HepG2 (cell line): ENCODE measurements at regions of chr12 and their contacts with region 1.

Region 1: GRCh38 chr12:60935983-60936761 is 1324.0 kb upstream of the USP15 start:
- DNase-seq: peak; percentile 3
- ATAC-seq: peak; percentile 61
- H3K4me3 ChIP-seq: no peak overlapping the region
- H3K27ac ChIP-seq: no peak overlapping the region
- H3K4me1 ChIP-seq: no peaks in the 10 kb centered on the region
- H3K27me3 ChIP-seq: no peaks in the 10 kb centered on the region
- CTCF ChIP-seq: no peak
- EP300 ChIP-seq: no peak
- POLR2A ChIP-seq: no peak
- RAD21 ChIP-seq: no peak

Region 2: DNA sequence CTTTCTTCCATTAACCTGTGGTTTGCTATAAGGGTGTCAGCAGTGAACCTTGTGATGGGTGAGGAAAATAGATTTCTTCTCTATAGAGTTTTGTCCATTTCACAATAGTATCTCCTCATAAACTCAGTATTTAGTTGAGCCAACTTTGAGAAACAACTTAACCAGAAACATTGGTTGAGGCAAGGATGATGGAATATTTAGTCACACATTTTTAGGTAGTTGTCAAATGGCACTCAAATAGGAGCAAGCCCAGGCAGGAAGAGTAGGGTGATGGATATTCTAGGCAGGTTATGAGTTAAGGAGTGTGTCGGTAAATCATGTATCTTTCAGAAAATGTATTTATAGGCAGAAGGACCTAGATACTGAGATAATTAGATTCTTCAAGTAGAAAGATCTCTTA is 72.8 kb before region 1 on chr12:
- CTCF ChIA-PET with region 1: no interaction called
- POLR2A ChIA-PET with region 1: no interaction called
- in situ Hi-C with region 1: no loop called
- intact Hi-C with region 1: no loop called
- DNase-seq: no peak
- ATAC-seq: no peak
- H3K4me3 ChIP-seq: no peak overlapping the region
- H3K27ac ChIP-seq: no peak overlapping the region
- H3K4me1 ChIP-seq: no peaks in the 10 kb centered on the region
- H3K27me3 ChIP-seq: no peaks in the 10 kb centered on the region
- CTCF ChIP-seq: no peak
- EP300 ChIP-seq: no peak
- POLR2A ChIP-seq: no peak
- RAD21 ChIP-seq: no peak

Region 3: DNA sequence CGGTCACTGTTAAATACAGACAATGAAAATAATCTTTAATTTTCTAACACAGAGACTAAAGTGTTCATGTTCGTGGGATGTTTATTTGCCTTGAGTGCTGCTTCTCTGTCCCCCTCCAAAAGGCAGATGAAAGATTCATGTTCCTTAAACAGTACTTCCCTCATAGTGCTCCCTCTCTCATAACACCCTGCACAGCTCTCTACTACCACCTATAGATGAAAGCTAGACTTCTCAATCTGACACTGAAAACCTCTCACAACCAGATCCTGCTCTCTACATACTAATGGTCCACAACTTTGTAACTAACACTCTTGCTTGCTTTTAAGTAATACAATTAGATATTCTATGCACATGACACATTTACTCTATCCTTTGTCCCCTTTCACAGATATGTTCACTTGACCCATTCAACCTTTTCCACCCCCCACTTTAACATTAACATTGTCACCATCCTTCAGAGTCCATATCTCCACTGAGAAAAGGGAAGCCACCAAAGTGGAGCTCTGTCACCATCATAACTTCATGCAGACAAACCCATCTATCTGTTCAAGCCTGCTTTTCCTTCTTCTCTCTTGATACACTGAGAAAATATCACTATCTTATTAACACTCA is 1057.7 kb after region 1 on chr12:
- CTCF ChIA-PET with region 1: no interaction called
- POLR2A ChIA-PET with region 1: no interaction called
- in situ Hi-C with region 1: no loop called
- intact Hi-C with region 1: loop called (anchors 10 kb)
- DNase-seq: peak; percentile 14
- ATAC-seq: peak; percentile 91
- H3K4me3 ChIP-seq: no peak overlapping the region
- H3K27ac ChIP-seq: no peak overlapping the region
- H3K4me1 ChIP-seq: no peaks in the 10 kb centered on the region
- H3K27me3 ChIP-seq: no peaks in the 10 kb centered on the region
- CTCF ChIP-seq: peak; percentile 70
- EP300 ChIP-seq: no peak
- POLR2A ChIP-seq: no peak
- RAD21 ChIP-seq: no peak